ENCODE measurements at regions of chr10 and their contacts with region 1.

Region 1: DNA sequence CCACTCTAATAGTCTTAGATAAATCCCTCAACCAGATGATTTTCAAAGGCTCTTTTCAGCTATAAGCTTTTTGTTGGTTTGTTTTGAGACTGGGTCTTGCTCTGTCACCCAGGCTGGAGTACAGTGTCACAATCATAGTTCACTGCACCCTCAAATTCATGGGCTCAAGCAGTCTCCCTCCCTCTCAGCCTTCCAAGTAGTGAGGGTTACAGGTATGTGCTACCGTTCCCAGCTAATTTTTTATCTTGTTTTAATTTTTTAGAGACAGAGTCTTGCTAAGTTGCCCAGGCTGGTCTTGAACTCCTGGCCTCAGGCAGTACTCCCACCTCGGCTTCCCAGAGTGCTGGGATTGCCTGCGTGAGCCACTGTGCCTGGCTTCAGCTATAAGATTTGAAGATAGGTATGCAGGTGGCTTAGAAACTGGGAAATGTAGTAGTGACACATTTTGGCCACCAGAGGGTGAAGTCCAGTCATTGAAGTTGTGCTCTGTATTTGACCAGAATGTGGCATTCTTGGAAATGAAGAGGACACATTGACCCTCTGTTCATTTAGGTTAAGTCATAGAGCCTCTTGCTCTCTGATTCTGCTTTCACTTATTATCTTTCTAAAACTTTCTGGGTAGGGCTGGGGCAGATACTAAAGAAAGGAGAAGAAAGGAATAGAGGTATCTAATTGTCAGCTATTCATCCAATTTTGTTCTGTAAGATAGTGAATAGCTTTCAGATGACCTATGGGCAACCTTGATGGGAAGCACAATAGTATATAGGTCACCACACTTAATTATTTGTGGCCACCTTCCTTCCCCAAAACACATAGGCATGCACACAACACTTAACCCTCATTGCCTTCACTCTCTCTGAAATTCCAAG is 36.0 kb downstream of the R3HCC1L start:
- DNase-seq: no peak
- H3K4me3 ChIP-seq: no peak overlapping the region
- H3K27me3 ChIP-seq: no peaks in the 10 kb centered on the region
- CTCF ChIP-seq: peak; percentile 80

Region 2: GRCh38 chr10:97810446-97810845 is 360.0 kb before region 1 on chr10:
- CTCF ChIA-PET with region 1: no interaction called
- POLR2A ChIA-PET with region 1: no interaction called
- DNase-seq: no peak
- H3K4me3 ChIP-seq: no peak overlapping the region
- H3K27me3 ChIP-seq: peaks cover 7% of the 10 kb centered on the region
- CTCF ChIP-seq: no peak

Region 3: GRCh38 chr10:98134431-98135221 is 35.9 kb before region 1 on chr10 and contains the start of gene R3HCC1L:
- CTCF ChIA-PET with region 1: no interaction called
- POLR2A ChIA-PET with region 1: no interaction called
- DNase-seq: no peak
- H3K4me3 ChIP-seq: peak within 1 kb of the TSS; percentile 74
- H3K27me3 ChIP-seq: no peaks in the 10 kb centered on the region
- CTCF ChIP-seq: no peak
- polyA plus RNA-seq, gene R3HCC1L: 5.6 and 11.6 TPM in 2 replicates

Region 4: GRCh38 chr10:98154076-98154475 is 16.4 kb before region 1 on chr10:
- CTCF ChIA-PET with region 1: interaction called, 11 read pairs
- POLR2A ChIA-PET with region 1: no interaction called
- DNase-seq: no peak
- H3K4me3 ChIP-seq: no peak overlapping the region
- H3K27me3 ChIP-seq: no peaks in the 10 kb centered on the region
- CTCF ChIP-seq: no peak

Region 5: DNA sequence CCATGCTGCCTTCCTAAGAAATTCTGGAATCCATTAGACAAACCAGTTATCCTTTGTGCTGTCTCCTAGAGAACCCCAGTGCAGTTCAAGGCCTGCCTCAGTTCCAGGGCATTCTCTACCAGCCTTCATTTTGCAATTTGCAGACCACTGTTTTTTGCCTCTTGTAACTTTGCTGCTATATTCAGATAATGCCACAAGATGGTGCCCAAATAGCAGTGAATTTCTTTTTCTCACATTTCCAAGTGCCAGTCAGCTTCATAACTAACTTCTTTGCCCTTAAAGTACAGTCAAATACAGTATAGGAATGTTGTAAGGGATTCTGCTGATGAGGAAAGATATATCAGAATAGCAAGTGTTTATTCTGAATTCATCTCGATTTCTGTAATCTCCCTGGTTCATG is 72.3 kb after region 1 on chr10:
- CTCF ChIA-PET with region 1: interaction called, 12 read pairs
- POLR2A ChIA-PET with region 1: no interaction called
- DNase-seq: no peak
- H3K4me3 ChIP-seq: no peak overlapping the region
- H3K27me3 ChIP-seq: no peaks in the 10 kb centered on the region
- CTCF ChIP-seq: peak; percentile 57

Measured in BJ (cell line).